Mammary epithelial cell (primary cell): ENCODE measurements at regions of chr1 and their contacts with region 1.

Region 1: DNA sequence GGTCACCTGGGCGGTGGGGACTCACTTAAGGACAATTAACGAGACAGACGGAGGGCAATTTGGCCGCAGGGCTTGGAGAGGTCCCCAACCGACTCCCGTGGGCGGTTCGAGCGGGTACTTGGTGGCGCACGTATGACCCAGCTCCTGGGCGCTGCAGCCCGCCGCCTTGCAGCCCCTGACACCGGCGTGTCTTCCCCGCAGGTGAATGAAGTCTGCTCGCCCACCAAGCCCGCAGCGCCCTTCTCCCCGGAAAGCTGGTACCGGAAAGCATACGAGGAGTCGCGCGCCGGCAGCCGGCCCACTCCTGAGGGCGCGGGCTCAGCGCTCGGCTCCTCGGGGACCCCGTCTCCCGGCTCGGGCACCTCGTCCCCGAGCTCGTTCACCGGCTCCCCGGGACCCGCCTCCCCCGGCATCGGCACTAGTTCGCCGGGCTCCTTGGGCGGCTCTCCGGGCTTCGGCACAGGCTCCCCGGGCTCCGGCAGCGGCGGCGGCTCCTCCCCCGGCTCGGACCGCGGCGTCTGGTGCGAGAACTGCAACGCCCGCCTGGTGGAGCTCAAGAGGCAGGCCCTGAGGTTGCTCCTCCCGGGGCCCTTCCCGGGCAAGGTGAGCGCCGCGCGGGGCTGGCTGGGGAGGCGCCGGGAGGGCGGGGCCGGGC is 1.4 kb downstream of the KIF26B start:
- DNase-seq: peak; percentile 82
- H3K4me3 ChIP-seq: peak overlapping the region; percentile 47 to 80 (median 73)
- H3K27ac ChIP-seq: no peak overlapping the region
- H3K4me1 ChIP-seq: peaks cover 26% of the 10 kb centered on the region
- H3K27me3 ChIP-seq: no peaks in the 10 kb centered on the region
- CTCF ChIP-seq: peak; percentile 52 to 79

Region 2: GRCh38 chr1:245008761-245009160 is 147.4 kb before region 1 on chr1:
- CTCF ChIA-PET with region 1: no interaction called
- dilution Hi-C with region 1: no loop called
- in situ Hi-C with region 1: no loop called
- intact Hi-C with region 1: no loop called
- DNase-seq: no peak
- H3K4me3 ChIP-seq: no peak overlapping the region
- H3K27ac ChIP-seq: no peak overlapping the region
- H3K4me1 ChIP-seq: no peaks in the 10 kb centered on the region
- H3K27me3 ChIP-seq: no peaks in the 10 kb centered on the region
- CTCF ChIP-seq: no peak

Region 3: DNA sequence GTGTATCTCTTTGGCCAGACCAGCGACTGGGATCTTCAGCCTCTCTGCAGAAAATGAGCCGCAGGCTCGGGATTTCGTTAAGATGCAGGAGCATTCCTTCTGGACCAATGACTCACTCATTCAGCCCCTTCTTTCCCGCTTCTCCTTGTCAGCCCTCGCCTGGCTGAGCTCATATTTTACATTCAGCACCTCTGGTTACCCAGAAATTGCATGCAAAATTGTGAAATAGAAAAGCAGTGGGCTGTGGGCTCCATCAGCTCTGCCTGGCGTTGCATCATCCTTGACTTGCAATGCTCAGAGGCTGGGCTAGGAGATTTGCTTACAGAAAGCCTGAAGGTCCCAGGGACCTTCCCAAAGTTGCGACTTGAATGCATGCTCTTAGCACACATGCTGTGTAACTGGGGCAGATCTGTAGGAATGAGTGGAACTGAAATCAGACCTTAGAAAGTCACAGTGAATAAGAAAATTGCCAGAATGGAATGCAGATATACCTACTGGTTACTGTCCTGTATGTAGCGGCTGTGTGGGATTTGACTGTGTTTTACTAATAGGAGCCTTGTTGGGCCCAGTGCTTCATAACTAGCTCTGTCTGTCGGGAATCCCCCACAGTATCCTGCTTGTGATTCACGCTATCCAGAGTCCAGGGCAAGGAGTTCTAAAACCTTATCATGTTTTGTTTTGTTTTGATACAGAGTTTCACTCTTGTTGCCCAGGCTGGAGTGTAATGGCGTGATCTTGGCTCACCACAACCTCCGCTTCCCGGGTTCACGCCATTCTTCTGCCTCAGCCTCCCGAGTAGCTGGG is 443.4 kb after region 1 on chr1:
- CTCF ChIA-PET with region 1: no interaction called
- dilution Hi-C with region 1: no loop called
- in situ Hi-C with region 1: no loop called
- intact Hi-C with region 1: loop called (anchors 10 kb)
- DNase-seq: no peak
- H3K4me3 ChIP-seq: no peak overlapping the region
- H3K27ac ChIP-seq: no peak overlapping the region
- H3K4me1 ChIP-seq: no peaks in the 10 kb centered on the region
- H3K27me3 ChIP-seq: no peaks in the 10 kb centered on the region
- CTCF ChIP-seq: no peak

Region 4: GRCh38 chr1:246002725-246003441 is 846.7 kb after region 1 on chr1:
- CTCF ChIA-PET with region 1: interaction called, 3 read pairs
- dilution Hi-C with region 1: no loop called
- in situ Hi-C with region 1: loop called (anchors 5 kb)
- intact Hi-C with region 1: loop called (anchors 1 kb)
- DNase-seq: peak; percentile 70
- H3K4me3 ChIP-seq: no peak overlapping the region
- H3K27ac ChIP-seq: no peak overlapping the region
- H3K4me1 ChIP-seq: peaks cover 33% of the 10 kb centered on the region
- H3K27me3 ChIP-seq: no peaks in the 10 kb centered on the region
- CTCF ChIP-seq: peak; percentile 80 to 90

Region 5: DNA sequence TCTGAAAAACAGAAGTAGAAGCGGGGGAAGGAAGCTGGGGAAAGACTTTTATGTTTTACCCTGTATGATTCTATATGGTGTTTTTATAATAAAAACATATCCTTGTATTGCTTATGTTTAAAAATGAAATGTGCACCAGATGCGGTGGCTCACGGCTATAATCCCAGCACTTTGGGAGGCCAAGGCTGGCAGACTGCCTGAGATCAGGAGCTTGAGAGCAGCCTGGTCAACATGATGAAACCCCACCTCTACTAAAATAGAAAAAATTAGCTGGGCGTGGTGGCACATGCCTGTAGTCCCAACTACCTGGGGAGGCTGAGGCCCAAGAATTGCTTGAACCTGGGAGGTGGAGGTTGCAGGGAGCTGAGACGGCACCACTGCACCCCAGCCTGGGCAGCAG is 1195.5 kb after region 1 on chr1:
- CTCF ChIA-PET with region 1: no interaction called
- dilution Hi-C with region 1: no loop called
- in situ Hi-C with region 1: no loop called
- intact Hi-C with region 1: loop called (anchors 5 kb)
- DNase-seq: no peak
- H3K4me3 ChIP-seq: no peak overlapping the region
- H3K27ac ChIP-seq: no peak overlapping the region
- H3K4me1 ChIP-seq: no peaks in the 10 kb centered on the region
- H3K27me3 ChIP-seq: no peaks in the 10 kb centered on the region
- CTCF ChIP-seq: no peak

Region 6: GRCh38 chr1:246497331-246497915 is 1341.2 kb after region 1 on chr1:
- CTCF ChIA-PET with region 1: no interaction called
- dilution Hi-C with region 1: no loop called
- in situ Hi-C with region 1: no loop called
- intact Hi-C with region 1: loop called (anchors 1 kb)
- DNase-seq: peak; percentile 52
- H3K4me3 ChIP-seq: no peak overlapping the region
- H3K27ac ChIP-seq: no peak overlapping the region
- H3K4me1 ChIP-seq: peaks cover under 1% of the 10 kb centered on the region
- H3K27me3 ChIP-seq: no peaks in the 10 kb centered on the region
- CTCF ChIP-seq: peak; percentile 66 to 68